AG04449 (cell line): ENCODE measurements at regions of chr7 and their contacts with region 1.

Region 1: DNA sequence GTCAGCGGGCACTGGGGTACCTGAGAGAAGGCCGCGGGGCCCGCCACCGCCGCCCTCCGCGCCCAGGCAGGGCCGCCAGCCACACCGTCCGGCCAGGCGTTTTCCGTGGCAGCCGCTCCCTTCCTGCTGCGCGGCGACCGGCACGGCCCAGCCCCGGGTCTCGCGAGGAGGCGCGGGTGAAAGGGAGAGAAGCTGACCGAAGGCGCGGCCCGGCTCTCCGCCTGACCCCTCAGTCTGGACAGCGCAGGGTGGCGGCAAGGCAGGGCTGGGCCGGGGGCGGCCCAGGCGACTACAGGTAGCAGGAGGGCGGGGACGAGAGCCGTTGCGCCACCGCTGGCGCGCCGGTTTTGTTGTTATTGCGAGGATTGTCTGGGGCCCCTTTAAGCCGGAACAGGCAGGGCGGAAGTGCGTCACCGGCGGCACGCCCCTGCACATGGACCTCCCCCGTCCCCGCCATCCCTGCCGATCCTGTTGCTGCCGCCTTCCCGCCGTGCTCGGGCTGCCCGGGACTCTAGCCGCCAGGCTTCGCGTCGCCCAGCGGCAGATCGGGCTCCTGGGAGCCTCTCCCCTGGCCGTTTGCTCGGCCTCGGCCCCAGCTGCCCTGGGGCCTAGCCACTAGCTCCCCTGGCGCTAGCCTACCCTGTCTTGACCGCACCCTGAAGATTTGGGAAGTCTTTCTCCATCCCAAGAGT is at the start of gene HERPUD2:
- DNase-seq: no peak
- H3K4me3 ChIP-seq: peak within 1 kb of the TSS; percentile 92
- CTCF ChIP-seq: no peak

Region 2: DNA sequence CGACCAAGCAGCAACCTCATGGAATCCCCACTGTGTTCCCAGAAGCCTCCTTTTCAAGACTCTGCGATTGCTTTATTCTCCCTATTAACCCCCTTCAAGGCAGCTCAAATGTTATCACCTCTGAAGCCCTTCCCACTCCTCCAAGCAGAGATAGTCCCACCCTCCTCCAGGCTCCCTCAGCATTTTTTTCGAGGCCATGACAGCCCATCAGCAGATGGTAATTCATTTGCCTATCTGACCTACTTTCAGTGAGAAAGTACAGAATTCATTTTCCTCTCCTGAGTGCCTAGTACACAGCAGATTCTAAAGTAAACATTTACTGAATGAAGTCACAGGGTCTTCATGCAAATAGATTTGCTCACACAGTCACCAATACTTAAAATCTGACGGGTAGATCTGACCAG is 47.8 kb before region 1 on chr7:
- CTCF ChIA-PET with region 1: no interaction called
- POLR2A ChIA-PET with region 1: no interaction called
- DNase-seq: no peak
- H3K4me3 ChIP-seq: no peak overlapping the region
- CTCF ChIP-seq: no peak

Region 3: GRCh38 chr7:35707422-35707821 is 12.5 kb after region 1 on chr7:
- CTCF ChIA-PET with region 1: interaction called, 14 read pairs
- POLR2A ChIA-PET with region 1: interaction called, 7 read pairs
- DNase-seq: no peak
- H3K4me3 ChIP-seq: no peak overlapping the region
- CTCF ChIP-seq: no peak

Region 4: GRCh38 chr7:35714862-35715261 is 19.9 kb after region 1 on chr7:
- CTCF ChIA-PET with region 1: interaction called, 14 read pairs
- POLR2A ChIA-PET with region 1: no interaction called
- DNase-seq: no peak
- H3K4me3 ChIP-seq: no peak overlapping the region
- CTCF ChIP-seq: no peak

Region 5: GRCh38 chr7:35906191-35906908 is 211.4 kb after region 1 on chr7:
- CTCF ChIA-PET with region 1: interaction called, 15 read pairs
- POLR2A ChIA-PET with region 1: no interaction called
- DNase-seq: peak; percentile 36
- H3K4me3 ChIP-seq: no peak overlapping the region
- CTCF ChIP-seq: peak; percentile 79